ENCODE measurements at regions of chr4 and their contacts with region 1.

Region 1: GRCh38 chr4:109406338-109406931 is 27.2 kb upstream of the SEC24B start:
- DNase-seq: peak in 4 of 7 donors; percentile 30 to 42 (median 37)
- H3K4me3 ChIP-seq: no peak overlapping the region
- H3K27ac ChIP-seq: no peak overlapping the region
- H3K4me1 ChIP-seq: no peaks in the 10 kb centered on the region
- H3K27me3 ChIP-seq: no peaks in the 10 kb centered on the region
- CTCF ChIP-seq: peak; percentile 49 to 76 (median 68)
- POLR2A ChIP-seq: no peak

Region 2: DNA sequence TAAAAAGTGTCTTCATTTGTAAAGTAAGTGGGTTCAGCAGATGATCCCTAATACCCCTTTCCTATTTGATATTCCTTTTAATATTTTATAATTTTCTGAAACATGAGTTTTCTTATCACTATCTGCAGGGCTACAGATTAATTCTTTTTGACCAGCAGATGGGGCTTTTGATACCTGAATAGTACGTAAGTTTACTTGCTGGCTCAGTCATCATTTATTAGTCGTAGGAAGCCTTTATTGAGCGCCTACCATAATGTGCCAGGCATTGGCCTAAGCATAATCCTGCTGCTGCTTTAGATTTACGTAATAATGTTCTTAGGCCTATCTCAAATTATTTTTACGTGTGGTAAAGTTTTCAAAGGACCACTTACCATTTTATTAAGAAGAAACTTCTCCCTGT is 723.0 kb before region 1 on chr4:
- intact Hi-C with region 1: loop called in 1 of 2 experiments (anchors 10 kb)
- DNase-seq: peak in 1 of 7 donors; percentile 7
- H3K4me3 ChIP-seq: no peak overlapping the region
- H3K27ac ChIP-seq: no peak overlapping the region
- H3K4me1 ChIP-seq: no peaks in the 10 kb centered on the region
- H3K27me3 ChIP-seq: no peaks in the 10 kb centered on the region
- CTCF ChIP-seq: peak in 4 of 6 experiments; percentile 25 to 44 (median 30)
- POLR2A ChIP-seq: no peak

Region 3: DNA sequence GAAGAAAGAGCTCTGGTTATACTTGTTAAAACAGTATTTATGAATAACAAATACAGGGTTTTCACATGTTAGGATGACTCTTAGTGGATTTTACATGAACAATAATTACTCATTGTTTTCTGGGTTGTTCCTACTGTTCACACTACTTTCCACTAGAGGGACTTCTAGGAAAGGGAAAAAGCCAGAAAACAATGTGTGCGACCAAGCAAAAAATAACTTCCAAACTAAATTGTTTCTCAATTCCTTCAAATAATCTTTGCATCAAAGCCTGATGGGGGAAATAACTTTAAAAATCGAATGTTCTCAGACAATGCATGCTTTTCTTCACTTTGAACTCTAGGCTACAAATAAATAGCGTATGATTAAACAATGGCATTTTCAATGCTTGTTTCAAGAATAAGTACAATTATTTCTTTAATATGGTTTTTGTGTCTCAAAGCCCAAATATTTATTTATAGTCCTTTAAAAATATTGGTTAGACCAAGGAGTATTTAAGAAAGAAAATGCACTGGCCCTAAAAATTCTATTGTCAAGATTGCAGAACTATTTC is 571.5 kb before region 1 on chr4:
- intact Hi-C with region 1: loop called (anchors 5 kb)
- DNase-seq: no peak
- H3K4me3 ChIP-seq: no peak overlapping the region
- H3K27ac ChIP-seq: no peak overlapping the region
- H3K4me1 ChIP-seq: no peaks in the 10 kb centered on the region
- H3K27me3 ChIP-seq: peaks cover 16% of the 10 kb centered on the region
- CTCF ChIP-seq: peak; percentile 41 to 71 (median 60)
- POLR2A ChIP-seq: no peak

Region 4: DNA sequence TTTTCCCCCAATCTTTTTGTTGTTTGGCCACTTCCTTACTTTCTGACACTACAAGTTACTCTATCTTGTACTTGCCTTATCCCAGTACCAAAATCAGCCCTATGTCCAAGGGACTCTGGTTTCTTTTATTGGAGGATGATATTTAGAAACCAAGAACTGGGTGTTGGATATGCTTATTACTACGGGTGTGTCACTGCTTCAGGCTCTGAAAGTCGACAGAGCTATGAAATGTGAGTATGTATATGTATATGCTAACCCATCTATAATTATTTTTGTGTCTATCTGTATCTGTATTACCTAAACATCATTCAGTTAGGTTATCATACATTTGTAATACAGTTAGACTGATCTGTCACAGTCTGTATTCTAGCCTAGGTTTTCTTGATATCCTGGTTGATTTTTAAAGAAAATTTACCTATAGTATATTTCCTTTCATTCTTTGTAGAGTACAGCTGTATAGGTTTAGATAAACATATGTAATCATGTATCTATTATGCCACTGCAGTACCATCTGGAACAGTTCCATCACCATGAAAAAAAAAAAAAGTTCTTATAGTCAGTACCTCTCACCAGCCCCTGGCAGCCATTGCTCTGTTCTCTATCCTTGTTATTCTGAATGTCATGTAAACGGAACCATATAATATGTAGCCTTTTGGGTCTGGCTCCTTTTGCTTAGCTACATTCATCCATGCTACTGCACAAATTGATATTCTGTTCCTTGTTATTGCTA is 45.3 kb after region 1 on chr4:
- intact Hi-C with region 1: no loop called
- DNase-seq: no peak
- H3K4me3 ChIP-seq: no peak overlapping the region
- H3K27ac ChIP-seq: no peak overlapping the region
- H3K4me1 ChIP-seq: peaks cover 7 to 9% of the 10 kb centered on the region in 2 donors
- H3K27me3 ChIP-seq: no peaks in the 10 kb centered on the region
- CTCF ChIP-seq: no peak
- POLR2A ChIP-seq: no peak

Measured in adrenal gland (tissue), 19 donors.